A673 (cell line): ENCODE measurements at regions of chrX and their contacts with region 1.

Region 1: GRCh38 chrX:119880552-119881437 is 9.2 kb downstream of the NDUFA1 start:
- DNase-seq: peak; percentile 66
- H3K4me3 ChIP-seq: no peak overlapping the region
- H3K27ac ChIP-seq: no peak overlapping the region
- H3K4me1 ChIP-seq: no peaks in the 10 kb centered on the region
- H3K27me3 ChIP-seq: no peaks in the 10 kb centered on the region
- CTCF ChIP-seq: peak; percentile 69

Region 2: GRCh38 chrX:119655125-119655524 is 225.7 kb before region 1 on chrX:
- CTCF ChIA-PET with region 1: no interaction called
- POLR2A ChIA-PET with region 1: no interaction called
- intact Hi-C with region 1: no loop called
- DNase-seq: peak; percentile 56
- H3K4me3 ChIP-seq: no peak overlapping the region
- H3K27ac ChIP-seq: no peak overlapping the region
- H3K4me1 ChIP-seq: no peaks in the 10 kb centered on the region
- H3K27me3 ChIP-seq: no peaks in the 10 kb centered on the region
- CTCF ChIP-seq: no peak

Region 3: GRCh38 chrX:119758731-119759247 is 122.0 kb before region 1 on chrX:
- CTCF ChIA-PET with region 1: interaction called, 11 read pairs
- POLR2A ChIA-PET with region 1: no interaction called
- intact Hi-C with region 1: no loop called
- DNase-seq: peak; percentile 40
- H3K4me3 ChIP-seq: peak overlapping the region; percentile 55
- H3K27ac ChIP-seq: no peak overlapping the region
- H3K4me1 ChIP-seq: no peaks in the 10 kb centered on the region
- H3K27me3 ChIP-seq: no peaks in the 10 kb centered on the region
- CTCF ChIP-seq: no peak

Region 4: DNA sequence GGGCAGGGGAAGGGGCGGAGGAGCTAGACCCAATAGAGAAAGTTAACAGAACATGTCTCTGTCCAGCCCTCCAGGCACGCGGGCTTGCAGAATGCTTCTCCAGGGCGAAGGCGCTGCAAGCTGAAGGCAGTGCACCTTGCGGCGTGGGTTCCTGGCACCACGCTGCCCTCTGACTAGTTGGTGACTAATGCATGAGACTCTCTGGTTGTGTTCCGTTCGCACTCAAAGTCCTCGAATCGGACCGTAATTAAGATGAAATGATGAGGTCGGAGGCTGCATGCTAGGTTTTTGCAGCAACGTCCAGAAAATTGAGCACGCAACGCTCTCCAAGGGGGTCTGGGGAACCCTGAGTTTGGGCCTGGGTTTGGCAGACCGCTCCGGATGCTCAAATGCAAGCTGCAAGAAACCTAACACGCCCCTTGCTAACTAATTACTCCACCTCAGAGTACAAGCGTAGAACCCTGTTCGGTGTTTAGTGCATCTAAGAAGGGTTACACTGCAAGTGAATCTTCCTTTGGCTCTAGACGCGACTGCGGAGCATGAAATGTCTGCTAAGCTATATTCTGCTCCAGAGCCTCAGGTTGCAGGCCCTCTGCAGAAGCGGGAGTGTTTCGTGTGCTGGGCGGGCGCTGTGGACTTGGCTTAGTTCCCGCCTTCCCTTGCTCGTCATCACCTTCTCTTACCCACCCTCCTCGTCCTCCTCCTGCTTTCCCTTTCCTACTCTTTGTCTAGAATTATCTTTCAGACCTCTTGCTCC is 119.9 kb after region 1 on chrX:
- CTCF ChIA-PET with region 1: no interaction called
- POLR2A ChIA-PET with region 1: no interaction called
- intact Hi-C with region 1: no loop called
- DNase-seq: no peak
- H3K4me3 ChIP-seq: no peak overlapping the region
- H3K27ac ChIP-seq: no peak overlapping the region
- H3K4me1 ChIP-seq: no peaks in the 10 kb centered on the region
- H3K27me3 ChIP-seq: peaks cover 74% of the 10 kb centered on the region
- CTCF ChIP-seq: no peak

Region 5: DNA sequence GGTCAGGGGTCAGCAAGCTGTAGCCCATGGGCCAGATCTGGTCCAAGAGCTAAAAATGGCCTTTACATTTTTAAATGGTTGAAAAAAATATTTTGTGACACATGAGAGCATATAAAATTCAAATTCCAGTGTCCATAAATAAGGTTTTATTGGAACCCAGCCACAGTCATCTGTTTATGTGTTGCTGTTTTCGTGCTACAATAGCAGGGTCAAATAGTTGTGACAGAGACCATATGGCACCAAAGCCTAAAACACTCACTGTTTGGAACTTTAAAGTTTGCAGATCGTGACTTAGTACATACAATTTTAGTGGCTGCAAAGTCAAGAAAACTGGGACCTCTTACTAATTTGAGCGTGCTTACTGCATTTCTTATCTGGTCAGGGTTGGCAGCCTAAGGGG is 559.1 kb after region 1 on chrX:
- CTCF ChIA-PET with region 1: no interaction called
- POLR2A ChIA-PET with region 1: no interaction called
- intact Hi-C with region 1: no loop called
- DNase-seq: no peak
- H3K4me3 ChIP-seq: no peak overlapping the region
- H3K27ac ChIP-seq: no peak overlapping the region
- H3K4me1 ChIP-seq: no peaks in the 10 kb centered on the region
- H3K27me3 ChIP-seq: no peaks in the 10 kb centered on the region
- CTCF ChIP-seq: no peak

Region 6: GRCh38 chrX:120457766-120458180 is 577.0 kb after region 1 on chrX:
- CTCF ChIA-PET with region 1: no interaction called
- POLR2A ChIA-PET with region 1: no interaction called
- intact Hi-C with region 1: no loop called
- DNase-seq: peak; percentile 35
- H3K4me3 ChIP-seq: no peak overlapping the region
- H3K27ac ChIP-seq: no peak overlapping the region
- H3K4me1 ChIP-seq: no peaks in the 10 kb centered on the region
- H3K27me3 ChIP-seq: no peaks in the 10 kb centered on the region
- CTCF ChIP-seq: no peak